A549 (cell line): ENCODE measurements at regions of chr1 and their contacts with region 1.

Region 1: GRCh38 chr1:27332536-27333281 is 9.1 kb upstream of the SYTL1 start:
- DNase-seq: peak in 1 of 2 experiments; percentile 69
- ATAC-seq: peak; percentile 66 to 91; a peak in 5 of 6 replicates
- H3K4me3 ChIP-seq: no peak overlapping the region
- H3K27ac ChIP-seq: no peak overlapping the region
- H3K4me1 ChIP-seq: no peaks in the 10 kb centered on the region
- CTCF ChIP-seq: peak; percentile 50
- EP300 ChIP-seq: no peak
- POLR2A ChIP-seq: no peak
- RAD21 ChIP-seq: peak; percentile 24 to 31; a peak in 4 of 5 replicates

Region 2: DNA sequence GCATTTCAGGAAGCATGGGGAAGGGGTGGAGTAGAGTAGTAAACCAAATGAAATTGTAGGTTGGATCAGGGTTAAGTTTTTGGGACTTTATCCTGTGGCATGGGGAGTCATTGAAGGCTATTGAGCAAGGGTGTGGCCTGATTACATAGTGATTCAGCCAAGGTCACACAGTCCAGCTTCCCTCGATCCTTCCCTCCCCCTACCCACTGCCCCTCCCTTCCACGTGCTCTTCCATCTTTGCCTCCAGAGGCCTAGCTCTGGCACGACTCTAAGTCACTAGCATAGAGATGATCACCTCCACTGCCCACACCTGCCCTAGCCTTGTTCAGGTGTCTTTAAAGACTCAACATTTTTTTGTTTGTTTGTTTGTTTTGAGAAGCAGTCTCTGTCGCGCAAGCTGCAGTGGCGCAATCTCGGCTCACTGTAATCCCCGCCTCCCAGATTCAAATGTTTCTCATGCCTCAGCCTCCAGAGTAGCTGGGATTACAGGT is 140.6 kb before region 1 on chr1:
- CTCF ChIA-PET with region 1: no interaction called
- POLR2A ChIA-PET with region 1: no interaction called
- DNase-seq: peak; percentile 58 to 88
- ATAC-seq: peak; percentile 91 to 95
- H3K4me3 ChIP-seq: no peak overlapping the region
- H3K27ac ChIP-seq: peak overlapping the region; percentile 73 to 93
- H3K4me1 ChIP-seq: peaks cover 23% of the 10 kb centered on the region
- CTCF ChIP-seq: no peak
- EP300 ChIP-seq: no peak
- POLR2A ChIP-seq: no peak
- RAD21 ChIP-seq: no peak

Region 3: GRCh38 chr1:27321813-27322577 is 10.7 kb before region 1 on chr1 and contains the start of gene TMEM222:
- CTCF ChIA-PET with region 1: interaction called, 29 read pairs
- POLR2A ChIA-PET with region 1: no interaction called
- DNase-seq: peak; percentile 95
- ATAC-seq: peak; percentile 98 to 99
- H3K4me3 ChIP-seq: peak within 1 kb of the TSS; percentile 99
- H3K27ac ChIP-seq: peak within 1 kb of the TSS; percentile 97 to 98
- H3K4me1 ChIP-seq: peaks cover 8% of the 10 kb centered on the region; the same call in 2 of the 3 replicates
- CTCF ChIP-seq: no peak
- EP300 ChIP-seq: no peak
- POLR2A ChIP-seq: peak; percentile 58
- RAD21 ChIP-seq: no peak; a peak in 1 of 5 replicates
- polyA plus RNA-seq, gene TMEM222: 27.1 and 28.4 TPM in 2 replicates

Region 4: GRCh38 chr1:27392096-27392777 is 59.5 kb after region 1 on chr1 and contains the start of gene GPR3:
- CTCF ChIA-PET with region 1: interaction called, 16 read pairs
- POLR2A ChIA-PET with region 1: no interaction called
- DNase-seq: peak; percentile 81 to 88
- ATAC-seq: peak; percentile 74 to 85
- H3K4me3 ChIP-seq: peak within 1 kb of the TSS; percentile 70
- H3K27ac ChIP-seq: peak within 1 kb of the TSS; percentile 74 to 89
- H3K4me1 ChIP-seq: peaks cover 17% of the 10 kb centered on the region
- CTCF ChIP-seq: peak; percentile 50
- EP300 ChIP-seq: no peak
- POLR2A ChIP-seq: no peak
- RAD21 ChIP-seq: peak; percentile 12 to 33; a peak in 2 of 5 replicates
- polyA plus RNA-seq, gene GPR3: 1.3 and 1.7 TPM in 2 replicates

Region 5: DNA sequence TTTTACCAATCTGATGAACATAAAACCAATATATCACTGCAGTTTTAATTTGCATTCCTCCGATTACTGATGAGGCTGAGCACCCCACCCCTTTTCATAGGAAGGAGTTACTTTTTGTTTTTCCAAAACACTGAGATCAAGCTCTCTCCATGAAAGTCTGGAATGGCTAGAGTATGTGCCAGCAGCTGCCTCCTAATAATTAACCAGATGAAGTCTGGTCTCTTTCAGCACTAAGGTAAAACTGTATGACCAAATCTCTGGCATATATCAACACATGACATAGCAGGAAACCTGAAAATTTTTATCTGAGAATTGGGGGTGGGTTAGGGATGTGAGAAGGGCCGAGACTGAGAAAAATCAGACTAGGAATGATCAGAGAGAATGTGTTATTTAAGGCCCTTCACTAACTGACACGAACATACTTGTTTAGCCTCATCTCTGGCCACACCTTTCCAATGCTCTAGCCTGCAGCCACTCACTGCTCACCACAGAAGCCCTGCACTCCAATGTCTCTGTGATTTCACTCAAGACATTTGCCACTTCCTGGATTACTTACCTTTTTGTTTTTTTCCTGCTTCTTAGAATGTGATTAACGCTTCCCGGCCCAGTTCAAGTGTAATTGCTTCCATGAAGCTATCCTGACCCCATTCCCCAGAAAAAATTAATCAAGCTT is 122.6 kb after region 1 on chr1:
- CTCF ChIA-PET with region 1: no interaction called
- POLR2A ChIA-PET with region 1: no interaction called
- DNase-seq: peak in 1 of 2 experiments; percentile 5
- ATAC-seq: peak in 1 of 2 experiments; percentile 46; a peak in 1 of 6 replicates
- H3K4me3 ChIP-seq: no peak overlapping the region
- H3K27ac ChIP-seq: peak overlapping the region in 1 of 2 experiments; percentile 48; a peak in 3 of 6 replicates
- H3K4me1 ChIP-seq: peaks cover 10% of the 10 kb centered on the region
- CTCF ChIP-seq: no peak
- EP300 ChIP-seq: no peak
- POLR2A ChIP-seq: no peak
- RAD21 ChIP-seq: no peak